ENCODE measurements at regions of chr14 and their contacts with region 1.

Region 1: GRCh38 chr14:46250113-46250703 is 401.4 kb downstream of the RPL10L start:
- DNase-seq: no peak
- H3K4me3 ChIP-seq: no peak overlapping the region
- H3K27ac ChIP-seq: no peak overlapping the region
- H3K4me1 ChIP-seq: no peaks in the 10 kb centered on the region
- H3K27me3 ChIP-seq: no peaks in the 10 kb centered on the region
- CTCF ChIP-seq: peak in 2 of 3 experiments; percentile 41 to 63; a peak in 2 of 4 replicates
- EP300 ChIP-seq: no peak
- POLR2A ChIP-seq: no peak
- RAD21 ChIP-seq: peak; percentile 65 to 74

Region 2: DNA sequence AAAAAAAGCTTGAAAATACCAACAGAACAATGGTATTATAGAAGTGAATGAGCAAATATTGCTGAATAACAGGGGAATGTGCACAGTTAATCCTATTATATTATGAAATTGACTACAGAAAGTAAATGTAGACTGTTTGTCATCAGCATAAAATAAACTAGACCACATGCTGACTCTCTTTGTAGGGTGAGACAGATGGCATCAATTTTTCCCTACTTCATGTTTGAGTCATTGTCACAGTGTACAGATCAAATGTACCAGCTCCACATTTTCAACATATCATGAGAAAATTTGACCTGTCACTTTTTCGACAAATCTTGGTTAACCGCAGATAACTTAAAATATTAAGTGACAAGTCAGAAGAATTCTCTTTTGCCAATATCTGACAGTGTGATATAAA is 19.7 kb before region 1 on chr14:
- CTCF ChIA-PET with region 1: interaction called, 13 read pairs
- POLR2A ChIA-PET with region 1: no interaction called
- DNase-seq: no peak
- H3K4me3 ChIP-seq: no peak overlapping the region
- H3K27ac ChIP-seq: no peak overlapping the region
- H3K4me1 ChIP-seq: no peaks in the 10 kb centered on the region
- H3K27me3 ChIP-seq: no peaks in the 10 kb centered on the region
- CTCF ChIP-seq: no peak
- EP300 ChIP-seq: no peak
- POLR2A ChIP-seq: no peak
- RAD21 ChIP-seq: no peak